Activated CD8-positive, alpha-beta memory T cell treated with anti-CD3 and anti-CD28 coated beads, Interleukin-2, amount 10 ng/mL, durations not matched to agents 7 days and 5 days (primary cell): ENCODE measurements at regions of chr22 and their contacts with region 1.

Region 1: DNA sequence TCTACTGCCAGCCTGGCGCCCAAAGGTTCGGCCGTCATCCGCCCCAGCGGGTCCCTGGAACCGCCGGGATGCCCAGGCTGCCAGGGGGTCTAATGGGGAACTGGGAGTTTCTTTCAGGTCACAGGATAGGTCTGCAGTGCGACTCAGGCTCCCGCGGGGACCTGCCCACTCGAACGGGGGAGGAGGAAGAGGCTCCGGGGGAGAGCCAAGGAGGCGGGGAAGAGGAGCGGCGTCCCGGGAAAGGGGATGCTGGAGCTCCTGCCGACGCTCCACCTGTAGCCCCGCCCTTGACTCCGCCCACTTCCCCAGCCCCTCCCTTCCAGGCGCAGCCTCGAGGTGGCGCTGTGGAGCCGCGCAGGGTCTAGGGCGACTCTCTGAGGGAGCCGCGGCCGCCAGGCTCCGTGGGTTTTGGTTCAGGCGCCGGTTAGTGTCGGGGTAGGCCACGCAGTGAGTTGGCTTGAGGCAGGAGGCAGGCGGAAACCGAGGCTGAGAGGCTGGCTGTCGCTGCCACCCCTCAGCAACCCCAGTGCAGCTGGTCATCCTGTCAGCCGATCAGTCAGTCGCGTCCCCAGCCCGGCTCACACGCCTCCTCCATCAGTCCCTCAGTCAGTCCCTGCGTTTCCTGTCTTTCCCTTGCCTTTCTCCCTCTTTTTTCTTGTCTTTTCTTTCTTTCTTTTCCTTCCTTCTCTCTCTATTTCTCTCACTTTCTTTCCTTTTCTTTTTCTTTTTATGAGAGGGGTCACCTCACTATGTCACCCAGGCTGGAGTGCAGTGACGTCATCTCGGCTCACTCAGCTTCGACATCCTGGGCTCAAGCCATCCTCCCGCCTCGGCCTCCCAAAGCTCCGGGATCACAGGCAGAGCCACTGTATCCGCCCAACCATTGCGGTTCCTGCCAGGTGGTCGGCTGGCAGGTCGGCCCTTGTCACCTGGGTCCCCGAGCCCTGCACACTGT is 26.4 kb downstream of the YWHAH start:
- DNase-seq: peak; percentile 89
- ATAC-seq: peak; percentile 97
- H3K4me3 Mint-ChIP-seq: peak overlapping the region; percentile 70
- H3K27ac Mint-ChIP-seq: peak overlapping the region; percentile 49
- H3K4me1 Mint-ChIP-seq: peaks cover 14% of the 10 kb centered on the region
- H3K27me3 Mint-ChIP-seq: peaks cover 2% of the 10 kb centered on the region

Region 2: DNA sequence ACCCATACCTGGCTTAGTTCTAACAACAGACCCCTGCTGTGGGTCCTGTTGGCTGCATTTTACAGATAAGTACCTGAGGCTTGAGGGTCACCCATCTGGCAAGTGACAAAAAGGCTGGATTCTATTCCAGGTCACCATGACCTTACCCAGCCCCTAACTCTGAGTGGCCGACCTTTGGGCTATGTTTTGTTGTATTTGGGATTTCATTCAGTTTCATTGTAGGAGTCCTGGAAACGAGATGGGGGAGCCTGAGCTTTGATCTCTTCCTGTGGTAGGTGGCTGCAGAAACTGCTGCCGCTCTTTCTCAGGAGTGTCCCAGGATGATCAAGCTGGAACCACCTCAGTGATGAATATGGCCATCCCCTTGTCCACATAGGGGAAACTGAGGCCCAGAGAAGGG is 51.0 kb before region 1 on chr22:
- CTCF ChIA-PET with region 1: interaction called, 10 read pairs
- DNase-seq: no peak
- ATAC-seq: no peak
- H3K4me3 Mint-ChIP-seq: no peak overlapping the region
- H3K27ac Mint-ChIP-seq: no peak overlapping the region
- H3K4me1 Mint-ChIP-seq: peaks cover 26% of the 10 kb centered on the region
- H3K27me3 Mint-ChIP-seq: peaks cover 4% of the 10 kb centered on the region

Region 3: DNA sequence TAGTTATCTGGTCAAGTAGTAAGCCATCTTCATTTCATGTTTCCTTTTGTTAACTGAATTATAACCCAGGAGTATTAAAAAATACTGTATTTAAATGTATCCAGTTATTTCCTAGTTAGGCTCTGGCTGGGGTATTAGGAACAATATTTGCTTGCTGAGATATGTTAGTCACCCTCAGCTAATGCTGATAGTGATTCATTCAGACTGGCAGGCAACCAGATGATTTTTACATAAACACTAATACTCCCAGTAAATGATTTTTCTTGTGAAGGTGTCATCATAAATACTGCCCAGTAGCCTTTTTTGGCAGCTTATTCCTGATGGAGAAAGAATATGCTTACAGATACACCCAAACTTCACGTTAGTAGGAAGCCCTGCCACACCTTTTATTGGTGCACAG is 18.3 kb before region 1 on chr22:
- CTCF ChIA-PET with region 1: interaction called, 19 read pairs
- DNase-seq: no peak
- ATAC-seq: no peak
- H3K4me3 Mint-ChIP-seq: no peak overlapping the region
- H3K27ac Mint-ChIP-seq: no peak overlapping the region
- H3K4me1 Mint-ChIP-seq: peaks cover 77% of the 10 kb centered on the region
- H3K27me3 Mint-ChIP-seq: no peaks in the 10 kb centered on the region

Region 4: GRCh38 chr22:32080904-32081303 is 110.1 kb after region 1 on chr22:
- CTCF ChIA-PET with region 1: interaction called, 15 read pairs
- DNase-seq: no peak
- ATAC-seq: peak; percentile 67
- H3K4me3 Mint-ChIP-seq: no peak overlapping the region
- H3K27ac Mint-ChIP-seq: no peak overlapping the region
- H3K4me1 Mint-ChIP-seq: peaks cover 5% of the 10 kb centered on the region
- H3K27me3 Mint-ChIP-seq: peaks cover 26% of the 10 kb centered on the region